ENCODE measurements at regions of chr2 and their contacts with region 1.

Region 1: GRCh38 chr2:229780856-229781773 is 66.8 kb upstream of the DNER start:
- DNase-seq: peak; percentile 55
- H3K4me3 Mint-ChIP-seq: no peak overlapping the region
- H3K27ac Mint-ChIP-seq: no peak overlapping the region
- H3K4me1 Mint-ChIP-seq: peaks cover 6% of the 10 kb centered on the region
- H3K27me3 Mint-ChIP-seq: no peaks in the 10 kb centered on the region
- CTCF ChIP-seq: peak; percentile 72

Region 2: GRCh38 chr2:229761663-229762062 is 19.5 kb before region 1 on chr2:
- CTCF ChIA-PET with region 1: interaction called, 26 read pairs
- POLR2A ChIA-PET with region 1: interaction called, 4 read pairs
- intact Hi-C with region 1: no loop called
- DNase-seq: no peak
- H3K4me3 Mint-ChIP-seq: no peak overlapping the region
- H3K27ac Mint-ChIP-seq: no peak overlapping the region
- H3K4me1 Mint-ChIP-seq: no peaks in the 10 kb centered on the region
- H3K27me3 Mint-ChIP-seq: no peaks in the 10 kb centered on the region
- CTCF ChIP-seq: no peak

Region 3: GRCh38 chr2:229768235-229768634 is 12.9 kb before region 1 on chr2:
- CTCF ChIA-PET with region 1: interaction called, 26 read pairs
- POLR2A ChIA-PET with region 1: interaction called, 4 read pairs
- intact Hi-C with region 1: no loop called
- DNase-seq: no peak
- H3K4me3 Mint-ChIP-seq: no peak overlapping the region
- H3K27ac Mint-ChIP-seq: no peak overlapping the region
- H3K4me1 Mint-ChIP-seq: no peaks in the 10 kb centered on the region
- H3K27me3 Mint-ChIP-seq: no peaks in the 10 kb centered on the region
- CTCF ChIP-seq: no peak

Region 4: GRCh38 chr2:229800997-229801754 is 20.1 kb after region 1 on chr2:
- CTCF ChIA-PET with region 1: interaction called, 74 read pairs
- POLR2A ChIA-PET with region 1: interaction called, 5 read pairs
- intact Hi-C with region 1: no loop called
- DNase-seq: peak; percentile 79
- H3K4me3 Mint-ChIP-seq: no peak overlapping the region
- H3K27ac Mint-ChIP-seq: no peak overlapping the region
- H3K4me1 Mint-ChIP-seq: peaks cover 9% of the 10 kb centered on the region
- H3K27me3 Mint-ChIP-seq: no peaks in the 10 kb centered on the region
- CTCF ChIP-seq: peak; percentile 65

Region 5: DNA sequence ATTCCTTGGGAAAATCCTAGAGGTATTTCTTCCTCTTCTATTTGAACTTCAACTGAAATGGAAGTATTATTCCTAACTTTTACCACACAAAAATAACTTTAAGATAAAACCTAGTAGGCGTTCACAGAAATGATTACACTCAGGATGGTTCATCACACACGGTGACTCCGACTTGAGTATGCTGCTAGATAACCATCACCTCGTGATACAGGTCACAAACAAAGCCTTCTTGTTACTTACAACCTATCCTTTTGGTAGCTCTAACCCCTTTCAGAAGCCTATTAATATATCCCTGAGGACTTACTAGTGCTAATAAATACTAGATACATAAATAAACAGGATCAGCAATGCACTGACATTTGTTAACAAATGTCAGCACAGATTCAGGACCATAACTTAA is 34.2 kb after region 1 on chr2:
- CTCF ChIA-PET with region 1: interaction called, 13 read pairs
- POLR2A ChIA-PET with region 1: no interaction called
- intact Hi-C with region 1: no loop called
- DNase-seq: no peak
- H3K4me3 Mint-ChIP-seq: no peak overlapping the region
- H3K27ac Mint-ChIP-seq: no peak overlapping the region
- H3K4me1 Mint-ChIP-seq: peaks cover 14% of the 10 kb centered on the region
- H3K27me3 Mint-ChIP-seq: no peaks in the 10 kb centered on the region
- CTCF ChIP-seq: no peak

Region 6: GRCh38 chr2:229821316-229821715 is 40.2 kb after region 1 on chr2:
- CTCF ChIA-PET with region 1: interaction called, 13 read pairs
- POLR2A ChIA-PET with region 1: no interaction called
- intact Hi-C with region 1: no loop called
- DNase-seq: no peak
- H3K4me3 Mint-ChIP-seq: no peak overlapping the region
- H3K27ac Mint-ChIP-seq: no peak overlapping the region
- H3K4me1 Mint-ChIP-seq: peaks cover 19% of the 10 kb centered on the region
- H3K27me3 Mint-ChIP-seq: no peaks in the 10 kb centered on the region
- CTCF ChIP-seq: no peak

Region 7: DNA sequence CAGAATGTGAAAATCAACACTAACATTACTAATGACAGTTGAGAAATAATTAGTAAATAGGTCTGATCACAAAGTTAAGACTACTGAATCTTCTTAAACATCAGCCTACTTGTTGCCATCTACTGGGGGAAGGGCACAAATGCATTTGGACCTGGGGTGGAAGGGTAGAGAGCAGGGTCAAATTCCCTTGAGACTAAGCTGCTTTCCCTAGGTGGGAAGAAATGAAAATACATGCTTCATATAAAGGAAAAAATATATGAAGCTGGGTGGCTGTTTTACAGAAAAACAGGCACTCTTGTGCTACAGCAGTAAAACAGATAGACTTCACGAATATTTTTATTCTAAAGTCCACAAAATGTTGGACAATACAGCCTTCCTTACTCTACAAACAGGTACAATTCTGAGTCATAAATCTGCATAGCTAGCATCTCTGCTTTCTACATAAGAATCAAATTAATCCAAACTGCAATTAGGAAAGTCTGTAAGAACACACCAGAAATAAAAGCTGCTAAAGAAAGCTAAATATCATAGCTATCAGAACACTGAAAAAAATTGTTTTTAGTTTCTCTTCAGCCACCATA is 129.8 kb after region 1 on chr2:
- CTCF ChIA-PET with region 1: interaction called, 13 read pairs
- POLR2A ChIA-PET with region 1: no interaction called
- intact Hi-C with region 1: no loop called
- DNase-seq: peak; percentile 46
- H3K4me3 Mint-ChIP-seq: no peak overlapping the region
- H3K27ac Mint-ChIP-seq: no peak overlapping the region
- H3K4me1 Mint-ChIP-seq: peaks cover 27% of the 10 kb centered on the region
- H3K27me3 Mint-ChIP-seq: no peaks in the 10 kb centered on the region
- CTCF ChIP-seq: peak; percentile 21